HepG2 (cell line): ENCODE measurements at regions of chrX and their contacts with region 1.

Region 1: GRCh38 chrX:120144178-120144844 is 14.1 kb upstream of the RHOXF2 start:
- DNase-seq: no peak
- ATAC-seq: no peak
- H3K4me3 ChIP-seq: no peak overlapping the region
- H3K27ac ChIP-seq: no peak overlapping the region
- H3K4me1 ChIP-seq: no peaks in the 10 kb centered on the region
- H3K27me3 ChIP-seq: no peaks in the 10 kb centered on the region; a peak in 1 of 5 replicates
- CTCF ChIP-seq: no peak
- EP300 ChIP-seq: no peak
- POLR2A ChIP-seq: no peak
- RAD21 ChIP-seq: no peak

Region 2: GRCh38 chrX:119981286-119982070 is 162.8 kb before region 1 on chrX:
- CTCF ChIA-PET with region 1: no interaction called
- POLR2A ChIA-PET with region 1: no interaction called
- in situ Hi-C with region 1: loop called (anchors 25 kb)
- intact Hi-C with region 1: no loop called
- DNase-seq: peak; percentile 3
- ATAC-seq: peak; percentile 47; the same call in 1 of the 3 replicates
- H3K4me3 ChIP-seq: no peak overlapping the region
- H3K27ac ChIP-seq: no peak overlapping the region
- H3K4me1 ChIP-seq: no peaks in the 10 kb centered on the region
- H3K27me3 ChIP-seq: no peaks in the 10 kb centered on the region
- CTCF ChIP-seq: peak; percentile 57
- EP300 ChIP-seq: no peak
- POLR2A ChIP-seq: no peak
- RAD21 ChIP-seq: no peak